Ascending aorta (tissue), 2 donors: ENCODE measurements at regions of chr1 and their contacts with region 1.

Region 1: DNA sequence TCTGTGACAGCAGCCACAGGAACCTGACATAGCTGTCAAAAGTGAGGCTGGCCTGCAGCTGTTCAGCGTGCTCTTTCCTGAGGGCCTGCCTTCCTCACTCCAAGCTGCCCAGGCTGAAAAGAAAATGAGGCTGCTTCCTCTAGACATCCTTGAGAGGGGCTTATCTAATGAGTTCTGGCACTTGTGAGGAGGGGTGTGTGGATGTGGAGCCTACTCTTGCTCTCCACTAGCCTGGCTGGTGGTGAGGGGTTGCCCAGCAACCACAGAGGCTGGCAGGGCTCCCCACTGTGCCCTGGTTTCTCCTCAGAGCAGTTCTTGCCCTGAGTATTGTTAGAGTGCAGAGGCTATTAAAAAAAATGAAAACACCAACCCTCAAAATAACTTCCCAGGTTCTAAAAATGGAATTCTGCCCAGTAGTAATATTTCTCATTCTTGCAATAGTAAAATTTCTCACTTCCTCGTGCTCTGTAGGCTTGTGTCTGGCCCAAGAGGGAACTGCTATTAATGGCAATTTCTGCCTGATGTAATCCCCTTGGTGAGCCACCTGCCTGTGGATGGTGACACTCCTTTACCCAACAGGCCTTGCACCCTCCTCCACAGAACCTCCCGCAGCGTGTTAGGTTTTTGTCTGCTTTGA is 52.6 kb upstream of the EPS8L3 start:
- DNase-seq: peak; percentile 53 to 85
- H3K4me3 ChIP-seq: no peak overlapping the region
- H3K27ac ChIP-seq: peak overlapping the region; percentile 72 to 93
- H3K4me1 ChIP-seq: peaks cover 10 to 15% of the 10 kb centered on the region in 2 donors
- H3K27me3 ChIP-seq: no peaks in the 10 kb centered on the region
- CTCF ChIP-seq: no peak

Region 2: GRCh38 chr1:109877320-109877771 is 61.1 kb after region 1 on chr1:
- intact Hi-C with region 1: loop called (anchors 2 kb)
- DNase-seq: peak in 1 of 2 donors; percentile 89
- H3K4me3 ChIP-seq: peak overlapping the region in 1 of 2 donors; percentile 42
- H3K27ac ChIP-seq: peak overlapping the region; percentile 93 to 94
- H3K4me1 ChIP-seq: peaks cover 11 to 37% of the 10 kb centered on the region in 2 donors
- H3K27me3 ChIP-seq: no peaks in the 10 kb centered on the region
- CTCF ChIP-seq: peak; percentile 30 to 46 (median 37)